ENCODE measurements at regions of chr11 and their contacts with region 1.

Region 1: GRCh38 chr11:48109046-48109666 is 107.5 kb upstream of the OR4B1 start:
- DNase-seq: no peak
- H3K4me3 ChIP-seq: peak overlapping the region; percentile 47 to 55; a peak in 3 of 4 replicates
- H3K27ac ChIP-seq: peak overlapping the region; percentile 53 to 86; a peak in 3 of 4 replicates
- H3K4me1 ChIP-seq: peaks cover 4 to 23% of the 10 kb centered on the region in 2 experiments; a peak in 3 of 4 replicates
- H3K27me3 ChIP-seq: no peaks in the 10 kb centered on the region
- CTCF ChIP-seq: peak; percentile 53
- EP300 ChIP-seq: no peak
- RAD21 ChIP-seq: peak; percentile 67

Region 2: GRCh38 chr11:47917643-47918369 is 191.3 kb before region 1 on chr11:
- CTCF ChIA-PET with region 1: interaction called, 28 read pairs
- POLR2A ChIA-PET with region 1: no interaction called
- DNase-seq: peak; percentile 67
- H3K4me3 ChIP-seq: 0 out of 4 replicates have a peak overlapping the region, but pooled peaks of 1 of the 2 experiments have one; percentile 16
- H3K27ac ChIP-seq: peak overlapping the region; percentile 68 to 70
- H3K4me1 ChIP-seq: peaks cover 35 to 46% of the 10 kb centered on the region in 2 experiments
- H3K27me3 ChIP-seq: no peaks in the 10 kb centered on the region
- CTCF ChIP-seq: no peak
- EP300 ChIP-seq: peak in 1 of 2 experiments; percentile 64; a peak in 1 of 4 replicates
- RAD21 ChIP-seq: no peak; the same call in none of the 2 replicates

Region 3: GRCh38 chr11:47924184-47924691 is 184.9 kb before region 1 on chr11:
- CTCF ChIA-PET with region 1: interaction called, 262 read pairs
- POLR2A ChIA-PET with region 1: no interaction called
- DNase-seq: no peak
- H3K4me3 ChIP-seq: no peak overlapping the region
- H3K27ac ChIP-seq: peak overlapping the region in 1 of 2 experiments; percentile 66; a peak in 2 of 4 replicates
- H3K4me1 ChIP-seq: peaks cover 2 to 12% of the 10 kb centered on the region in 2 experiments; a peak in 3 of 4 replicates
- H3K27me3 ChIP-seq: no peaks in the 10 kb centered on the region
- CTCF ChIP-seq: no peak
- EP300 ChIP-seq: peak in 1 of 2 experiments; percentile 46; a peak in 1 of 4 replicates
- RAD21 ChIP-seq: no peak

Region 4: DNA sequence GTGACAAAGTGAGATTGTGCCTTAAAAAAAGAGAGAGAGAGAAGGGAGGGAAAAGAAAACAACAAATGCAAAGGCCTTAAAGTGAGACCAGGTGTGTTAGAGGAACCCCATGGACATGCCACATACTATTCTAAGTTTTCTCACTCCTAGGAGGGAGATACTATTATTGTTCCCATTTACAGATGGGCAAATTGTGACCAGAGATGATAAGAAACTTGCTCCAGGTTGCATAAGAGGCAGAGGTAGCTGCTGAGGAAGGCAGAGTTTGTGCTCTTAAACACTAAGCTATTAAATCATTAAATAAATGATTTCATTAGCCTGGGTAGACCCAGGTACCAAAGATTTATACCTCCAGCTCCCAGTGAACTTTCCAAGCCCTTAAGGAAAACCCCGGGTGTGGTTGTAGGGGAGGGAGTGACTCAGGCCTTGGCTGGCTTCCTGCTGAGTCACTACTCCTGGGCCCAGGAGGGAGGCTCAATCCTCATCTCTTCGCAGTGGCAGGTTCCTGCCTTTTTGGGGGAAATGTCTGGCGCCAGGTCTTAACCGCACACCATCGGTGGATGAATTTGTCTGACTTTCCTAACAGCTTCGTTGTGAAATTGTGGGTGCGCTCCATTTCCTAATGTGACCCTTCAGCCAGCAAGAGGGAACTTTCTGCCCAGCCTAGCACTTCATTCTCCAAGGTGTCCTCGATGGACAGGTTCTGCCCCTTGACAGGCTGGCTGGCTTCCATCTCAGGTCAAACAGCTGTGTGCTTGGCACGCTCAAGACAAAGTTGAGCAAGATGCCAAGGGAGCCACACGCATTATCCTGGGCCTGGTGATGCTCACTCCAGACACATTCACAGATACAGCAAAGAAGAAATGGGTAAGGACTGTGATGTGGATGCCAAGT is 162.2 kb before region 1 on chr11:
- CTCF ChIA-PET with region 1: interaction called, 10 read pairs
- POLR2A ChIA-PET with region 1: no interaction called
- DNase-seq: no peak
- H3K4me3 ChIP-seq: no peak overlapping the region
- H3K27ac ChIP-seq: peak overlapping the region in 1 of 2 experiments; percentile 83; a peak in 2 of 4 replicates
- H3K4me1 ChIP-seq: peaks cover 0 to 11% of the 10 kb centered on the region in 2 experiments; a peak in 2 of 4 replicates
- H3K27me3 ChIP-seq: no peaks in the 10 kb centered on the region
- CTCF ChIP-seq: no peak
- EP300 ChIP-seq: peak; percentile 7 to 90; a peak in 2 of 4 replicates
- RAD21 ChIP-seq: no peak

Region 5: DNA sequence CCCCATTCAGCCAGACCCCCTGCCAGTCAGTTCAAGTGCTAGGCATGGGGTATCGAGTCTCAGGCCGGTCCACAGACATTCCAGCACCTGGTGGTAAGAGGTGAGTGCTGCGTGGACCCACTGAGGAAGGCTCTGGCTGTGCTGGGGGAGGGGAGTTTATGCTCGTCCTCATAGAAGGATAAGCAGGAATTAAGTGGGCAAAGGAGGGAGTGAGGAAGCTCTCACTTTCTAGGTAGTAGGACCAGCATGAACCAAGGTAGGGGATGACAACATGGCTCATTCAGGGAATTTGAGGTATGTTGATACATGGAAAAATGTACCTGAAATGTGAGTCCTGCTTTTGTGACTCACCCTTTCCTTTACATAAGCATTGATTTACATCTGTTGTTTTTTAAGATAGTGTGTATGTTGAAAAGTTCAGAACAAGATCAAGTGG is 12.1 kb before region 1 on chr11:
- CTCF ChIA-PET with region 1: interaction called, 20 read pairs
- POLR2A ChIA-PET with region 1: no interaction called
- DNase-seq: no peak
- H3K4me3 ChIP-seq: no peak overlapping the region
- H3K27ac ChIP-seq: no peak overlapping the region
- H3K4me1 ChIP-seq: peaks cover 0 to 27% of the 10 kb centered on the region in 2 experiments; a peak in 1 of 4 replicates
- H3K27me3 ChIP-seq: no peaks in the 10 kb centered on the region
- CTCF ChIP-seq: no peak
- EP300 ChIP-seq: no peak
- RAD21 ChIP-seq: no peak